Activated CD4-positive, alpha-beta memory T cell treated with anti-CD3 and anti-CD28 coated beads, Interleukin-2, amount 10 ng/mL, durations not matched to agents 7 days and 5 days (primary cell): ENCODE measurements at regions of chr1 and their contacts with region 1.

Region 1: GRCh38 chr1:25247024-25247828 is at the start of gene RSRP1:
- DNase-seq: peak; percentile 100
- H3K4me3 Mint-ChIP-seq: peak within 1 kb of the TSS; percentile 97
- H3K27ac Mint-ChIP-seq: peak within 1 kb of the TSS; percentile 100
- H3K4me1 Mint-ChIP-seq: peaks cover 55% of the 10 kb centered on the region
- H3K27me3 Mint-ChIP-seq: no peaks in the 10 kb centered on the region
- total RNA-seq, gene RSRP1: 236 to 237 TPM

Region 2: GRCh38 chr1:25338188-25338981 is 91.2 kb after region 1 on chr1 and contains the start of gene TMEM50A:
- CTCF ChIA-PET with region 1: no interaction called
- POLR2A ChIA-PET with region 1: interaction called, 14 read pairs
- DNase-seq: peak; percentile 92
- H3K4me3 Mint-ChIP-seq: peak within 1 kb of the TSS; percentile 90
- H3K27ac Mint-ChIP-seq: peak within 1 kb of the TSS; percentile 90
- H3K4me1 Mint-ChIP-seq: peaks cover 34% of the 10 kb centered on the region
- H3K27me3 Mint-ChIP-seq: no peaks in the 10 kb centered on the region
- total RNA-seq, gene TMEM50A: 182 to 183 TPM

Region 3: DNA sequence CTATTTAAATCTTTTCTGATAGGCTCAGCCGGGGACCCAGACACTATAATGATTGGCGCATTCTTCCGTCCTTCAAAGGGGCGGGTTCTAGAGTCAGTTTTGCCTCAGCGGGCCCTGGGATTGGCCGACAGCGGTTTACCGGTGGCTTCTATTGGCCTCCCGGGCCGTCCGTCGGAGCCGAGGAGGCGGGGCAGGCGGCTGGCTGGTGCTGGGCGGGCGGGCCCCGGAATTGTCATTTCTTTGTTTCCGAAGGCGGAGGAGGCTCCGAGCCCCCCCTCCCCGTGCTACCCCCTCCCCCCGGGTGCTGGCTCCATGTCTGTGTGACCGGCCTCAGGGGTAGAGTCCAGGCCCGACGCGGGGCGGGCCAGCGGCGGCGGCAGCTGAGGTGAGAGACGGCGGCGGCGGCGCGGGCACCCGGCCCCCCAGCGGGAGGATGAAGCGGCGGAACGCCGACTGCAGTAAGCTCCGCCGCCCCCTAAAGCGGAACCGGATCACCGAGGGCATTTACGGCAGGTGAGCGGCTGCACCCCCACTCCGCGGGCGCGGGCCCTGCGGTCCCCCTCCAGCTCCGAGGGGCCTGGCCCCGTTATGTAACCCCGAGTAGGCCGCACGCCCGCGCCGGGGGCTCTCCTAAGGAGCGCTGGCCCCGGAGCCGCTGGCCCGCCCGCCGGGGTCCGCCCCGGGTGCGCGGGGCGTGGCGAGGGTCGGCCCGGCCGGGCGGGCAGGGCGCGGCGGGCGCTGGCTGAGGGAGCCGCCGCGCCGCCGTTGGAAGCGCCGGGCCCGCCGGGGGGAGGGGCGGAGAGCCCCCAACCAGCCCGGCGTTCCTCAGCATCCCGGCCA is 183.7 kb after region 1 on chr1 and contains the start of gene MACO1:
- CTCF ChIA-PET with region 1: no interaction called
- POLR2A ChIA-PET with region 1: interaction called, 11 read pairs
- DNase-seq: peak; percentile 97
- H3K4me3 Mint-ChIP-seq: peak within 1 kb of the TSS; percentile 93
- H3K27ac Mint-ChIP-seq: peak within 1 kb of the TSS; percentile 97
- H3K4me1 Mint-ChIP-seq: peaks cover 50% of the 10 kb centered on the region
- H3K27me3 Mint-ChIP-seq: no peaks in the 10 kb centered on the region
- total RNA-seq, gene MACO1: 15.8 to 16.3 TPM